ENCODE measurements at regions of chr12 and their contacts with region 1.

Region 1: GRCh38 chr12:67436230-67436629 is 167.1 kb downstream of the CAND1 start:
- DNase-seq: no peak
- H3K4me3 ChIP-seq: no peak overlapping the region
- H3K4me3 Mint-ChIP-seq: no peak overlapping the region
- H3K27ac ChIP-seq: no peak overlapping the region
- H3K27ac Mint-ChIP-seq: no peak overlapping the region
- H3K4me1 ChIP-seq: peaks cover 2% of the 10 kb centered on the region
- H3K4me1 Mint-ChIP-seq: peaks cover 11 to 17% (median 13%) of the 10 kb centered on the region in 3 donors
- H3K27me3 ChIP-seq: no peaks in the 10 kb centered on the region
- H3K27me3 Mint-ChIP-seq: peaks cover 0 to 1% of the 10 kb centered on the region in 2 donors

Region 2: GRCh38 chr12:67410667-67411067 is 25.6 kb before region 1 on chr12:
- CTCF ChIA-PET with region 1: no interaction called
- POLR2A ChIA-PET with region 1: no interaction called
- DNase-seq: no peak
- H3K4me3 ChIP-seq: no peak overlapping the region
- H3K4me3 Mint-ChIP-seq: no peak overlapping the region
- H3K27ac ChIP-seq: no peak overlapping the region
- H3K27ac Mint-ChIP-seq: no peak overlapping the region
- H3K4me1 ChIP-seq: no peaks in the 10 kb centered on the region
- H3K4me1 Mint-ChIP-seq: no peaks in the 10 kb centered on the region
- H3K27me3 ChIP-seq: no peaks in the 10 kb centered on the region
- H3K27me3 Mint-ChIP-seq: peaks cover 4 to 5% of the 10 kb centered on the region in 2 donors

Region 3: DNA sequence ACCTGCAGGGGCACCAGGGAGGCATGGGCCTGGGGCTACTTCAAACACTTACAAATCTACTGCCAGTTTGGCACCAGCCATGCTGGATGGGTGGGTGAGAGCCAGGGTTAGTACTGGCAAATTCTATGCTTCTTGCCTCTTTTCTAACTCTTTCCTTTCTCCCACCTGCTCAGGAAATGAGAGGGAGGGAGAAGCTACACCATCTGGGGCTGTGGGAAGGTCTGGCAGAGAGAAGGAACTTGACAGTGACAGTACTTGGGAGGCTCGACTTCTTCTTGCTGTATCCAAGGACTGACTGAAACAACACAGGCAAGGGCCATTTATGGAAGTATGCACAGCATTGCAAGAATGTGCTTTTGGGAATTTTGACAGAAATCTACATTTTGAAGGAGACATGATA is 62.8 kb after region 1 on chr12:
- CTCF ChIA-PET with region 1: no interaction called
- POLR2A ChIA-PET with region 1: no interaction called
- DNase-seq: no peak
- H3K4me3 ChIP-seq: no peak overlapping the region
- H3K4me3 Mint-ChIP-seq: no peak overlapping the region
- H3K27ac ChIP-seq: no peak overlapping the region
- H3K27ac Mint-ChIP-seq: no peak overlapping the region
- H3K4me1 ChIP-seq: peaks cover 11% of the 10 kb centered on the region
- H3K4me1 Mint-ChIP-seq: peaks cover 18 to 22% (median 21%) of the 10 kb centered on the region in 3 donors
- H3K27me3 ChIP-seq: no peaks in the 10 kb centered on the region
- H3K27me3 Mint-ChIP-seq: no peaks in the 10 kb centered on the region

Region 4: DNA sequence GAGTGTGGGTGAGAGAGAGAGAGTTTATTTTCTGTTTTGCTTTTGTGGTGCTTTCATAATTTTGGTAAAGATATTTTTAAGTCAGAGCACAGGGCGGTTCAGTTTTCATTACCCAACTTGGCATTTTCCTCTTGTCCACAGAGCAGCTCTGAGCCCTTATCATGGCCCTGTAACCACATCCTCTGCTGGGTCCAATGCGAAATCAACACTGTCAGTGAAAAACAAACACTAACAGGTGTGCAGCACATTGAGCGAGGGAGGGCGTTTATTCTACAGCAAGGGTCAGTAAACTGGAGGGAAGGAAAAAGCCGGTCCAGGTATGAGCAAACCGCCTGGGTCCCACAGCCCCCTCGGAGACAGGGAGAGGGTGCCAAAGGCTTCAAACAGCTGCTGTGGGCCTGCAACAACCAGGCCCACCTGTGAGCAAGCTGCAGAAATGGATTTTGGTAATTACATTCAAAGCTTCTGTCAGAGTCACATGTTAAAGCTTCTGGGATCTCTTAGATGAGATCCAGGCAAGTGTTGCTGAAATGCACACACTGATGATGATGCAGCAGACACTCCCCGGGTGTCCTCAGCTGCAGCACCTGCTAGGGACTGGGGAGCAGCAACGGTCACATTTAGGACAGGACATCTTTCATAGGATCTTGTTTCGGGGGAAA is 79.6 kb after region 1 on chr12:
- CTCF ChIA-PET with region 1: no interaction called
- POLR2A ChIA-PET with region 1: interaction called, 13 read pairs
- DNase-seq: peak in 4 of 5 donors; percentile 5 to 66 (median 42)
- H3K4me3 ChIP-seq: peak overlapping the region; percentile 36
- H3K4me3 Mint-ChIP-seq: peak overlapping the region; percentile 7 to 80 (median 72)
- H3K27ac ChIP-seq: no peak overlapping the region
- H3K27ac Mint-ChIP-seq: peak overlapping the region; percentile 25 to 94 (median 75)
- H3K4me1 ChIP-seq: peaks cover 44% of the 10 kb centered on the region
- H3K4me1 Mint-ChIP-seq: peaks cover 42 to 70% (median 57%) of the 10 kb centered on the region in 3 donors
- H3K27me3 ChIP-seq: no peaks in the 10 kb centered on the region
- H3K27me3 Mint-ChIP-seq: no peaks in the 10 kb centered on the region

Region 5: GRCh38 chr12:67562513-67563287 is 126.5 kb after region 1 on chr12:
- CTCF ChIA-PET with region 1: no interaction called
- POLR2A ChIA-PET with region 1: no interaction called
- DNase-seq: no peak
- H3K4me3 ChIP-seq: no peak overlapping the region
- H3K4me3 Mint-ChIP-seq: no peak overlapping the region
- H3K27ac ChIP-seq: no peak overlapping the region
- H3K27ac Mint-ChIP-seq: no peak overlapping the region
- H3K4me1 ChIP-seq: no peaks in the 10 kb centered on the region
- H3K4me1 Mint-ChIP-seq: peaks cover 4 to 13% (median 11%) of the 10 kb centered on the region in 3 donors
- H3K27me3 ChIP-seq: no peaks in the 10 kb centered on the region
- H3K27me3 Mint-ChIP-seq: peaks cover 0 to 4% of the 10 kb centered on the region in 2 donors